Motor neuron (in vitro differentiated cells): ENCODE measurements at regions of chr17 and their contacts with region 1.

Region 1: GRCh38 chr17:71922439-71922838 is 198.4 kb upstream of the SOX9 start:
- ATAC-seq: peak in 2 of 8 experiments; percentile 30 to 45
- H3K4me3 ChIP-seq: no peak overlapping the region
- H3K27ac ChIP-seq: no peak overlapping the region
- H3K4me1 ChIP-seq: no peaks in the 10 kb centered on the region

Region 2: DNA sequence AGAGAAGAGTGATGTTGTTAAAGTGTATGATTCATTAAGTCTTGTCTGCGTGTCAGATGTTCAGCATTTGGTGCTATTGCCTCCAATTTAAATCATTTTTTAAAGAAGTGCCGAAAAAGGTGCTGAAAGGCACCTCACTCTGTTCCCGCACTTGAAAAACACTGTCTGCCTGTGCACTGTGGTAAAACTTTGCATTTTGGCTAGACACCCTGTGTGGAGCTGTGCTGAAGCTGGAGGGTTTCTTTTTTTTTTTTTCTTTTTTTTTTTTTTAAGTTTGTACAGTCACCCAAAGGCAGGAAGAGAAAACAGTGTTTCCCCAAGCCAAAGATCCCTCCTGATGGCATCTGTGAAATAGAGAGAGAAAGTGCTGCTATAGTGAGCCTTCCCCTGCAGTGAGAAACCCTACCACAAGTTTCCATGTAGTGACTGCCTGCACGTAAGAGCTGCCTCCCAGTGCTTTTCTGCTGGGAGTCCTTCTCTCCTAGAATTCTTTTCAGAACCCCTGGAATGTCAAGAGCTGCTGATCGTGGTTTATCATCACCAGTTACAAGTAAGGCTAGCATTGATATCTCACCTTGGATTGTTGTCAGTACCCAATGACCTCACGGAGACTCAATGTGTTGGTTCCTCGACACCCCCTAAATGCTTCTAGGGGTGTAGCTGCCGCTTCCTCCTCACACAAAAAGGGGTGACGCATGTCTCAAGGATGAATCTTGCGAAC is 82.3 kb after region 1 on chr17:
- in situ Hi-C with region 1: loop called in 1 of 9 experiments (anchors 25 kb)
- ATAC-seq: peak in 1 of 8 experiments; percentile 64
- H3K4me3 ChIP-seq: no peak overlapping the region
- H3K27ac ChIP-seq: no peak overlapping the region
- H3K4me1 ChIP-seq: peaks cover 4 to 5% of the 10 kb centered on the region in 2 donors